ENCODE measurements at regions of chr16 and their contacts with region 1.

Region 1: GRCh38 chr16:72291531-72291981 is 119.6 kb upstream of the PMFBP1 start:
- DNase-seq: peak; percentile 27
- ATAC-seq: peak; percentile 96
- H3K4me3 ChIP-seq: no peak overlapping the region
- H3K27ac ChIP-seq: no peak overlapping the region
- H3K4me1 ChIP-seq: peaks cover 4% of the 10 kb centered on the region
- H3K27me3 ChIP-seq: no peaks in the 10 kb centered on the region
- CTCF ChIP-seq: no peak

Region 2: DNA sequence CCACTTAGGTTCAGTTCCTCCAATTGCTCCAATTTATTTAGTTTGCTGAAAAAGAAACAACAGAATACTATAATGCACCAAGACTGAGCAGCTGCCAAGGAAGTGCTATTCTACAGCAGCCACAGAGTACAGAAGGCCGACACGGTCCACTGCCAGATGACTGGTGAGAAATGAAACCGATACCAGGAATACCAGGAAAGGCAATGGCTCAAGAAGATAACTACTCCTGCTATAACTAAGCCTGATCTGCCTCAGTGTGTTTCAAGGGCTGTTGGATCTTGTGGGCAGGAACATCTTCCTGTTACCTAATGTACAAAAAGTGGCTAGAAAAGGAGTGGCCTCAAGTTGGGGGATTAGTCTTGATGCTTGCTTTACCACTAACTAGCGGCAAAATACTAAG is 632.8 kb before region 1 on chr16:
- CTCF ChIA-PET with region 1: no interaction called
- POLR2A ChIA-PET with region 1: no interaction called
- in situ Hi-C with region 1: no loop called
- intact Hi-C with region 1: no loop called
- DNase-seq: no peak
- ATAC-seq: no peak
- H3K4me3 ChIP-seq: no peak overlapping the region
- H3K27ac ChIP-seq: no peak overlapping the region
- H3K4me1 ChIP-seq: no peaks in the 10 kb centered on the region
- H3K27me3 ChIP-seq: no peaks in the 10 kb centered on the region
- CTCF ChIP-seq: no peak

Region 3: DNA sequence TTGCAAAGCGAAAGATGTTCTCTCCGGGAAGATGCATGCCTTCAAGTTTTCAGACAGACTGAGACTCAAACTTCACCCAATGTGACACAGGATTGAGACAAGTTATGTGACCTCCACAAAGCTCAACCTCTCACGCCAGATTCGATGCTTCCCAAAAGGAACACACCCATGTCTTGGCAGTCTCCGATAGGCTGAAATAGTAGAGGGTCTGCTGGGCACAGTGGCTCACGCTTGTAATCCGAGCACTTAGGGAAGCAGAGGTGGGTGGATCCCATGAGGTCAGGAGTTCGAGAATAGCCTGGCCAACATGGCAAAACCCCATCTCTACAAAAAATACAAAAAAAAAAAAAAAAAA is 734.3 kb after region 1 on chr16:
- CTCF ChIA-PET with region 1: no interaction called
- POLR2A ChIA-PET with region 1: interaction called, 15 read pairs
- in situ Hi-C with region 1: no loop called
- intact Hi-C with region 1: no loop called
- DNase-seq: no peak
- ATAC-seq: no peak
- H3K4me3 ChIP-seq: no peak overlapping the region
- H3K27ac ChIP-seq: no peak overlapping the region
- H3K4me1 ChIP-seq: peaks cover 10% of the 10 kb centered on the region
- H3K27me3 ChIP-seq: no peaks in the 10 kb centered on the region
- CTCF ChIP-seq: no peak

Region 4: GRCh38 chr16:73082608-73083007 is 791.1 kb after region 1 on chr16:
- CTCF ChIA-PET with region 1: no interaction called
- POLR2A ChIA-PET with region 1: no interaction called
- in situ Hi-C with region 1: no loop called
- intact Hi-C with region 1: no loop called
- DNase-seq: peak; percentile 79
- ATAC-seq: peak; percentile 26; the same call in 1 of the 2 replicates
- H3K4me3 ChIP-seq: no peak overlapping the region
- H3K27ac ChIP-seq: no peak overlapping the region
- H3K4me1 ChIP-seq: no peaks in the 10 kb centered on the region
- H3K27me3 ChIP-seq: no peaks in the 10 kb centered on the region
- CTCF ChIP-seq: no peak